Dendritic cell treated with granulocyte-macrophage colony-stimulating factor and Interleukin-4, amounts not matched to agents 40 ng/mL and 50 ng/mL, for 4 days (primary cell): ENCODE measurements at regions of chr15 and their contacts with region 1.

Region 1: DNA sequence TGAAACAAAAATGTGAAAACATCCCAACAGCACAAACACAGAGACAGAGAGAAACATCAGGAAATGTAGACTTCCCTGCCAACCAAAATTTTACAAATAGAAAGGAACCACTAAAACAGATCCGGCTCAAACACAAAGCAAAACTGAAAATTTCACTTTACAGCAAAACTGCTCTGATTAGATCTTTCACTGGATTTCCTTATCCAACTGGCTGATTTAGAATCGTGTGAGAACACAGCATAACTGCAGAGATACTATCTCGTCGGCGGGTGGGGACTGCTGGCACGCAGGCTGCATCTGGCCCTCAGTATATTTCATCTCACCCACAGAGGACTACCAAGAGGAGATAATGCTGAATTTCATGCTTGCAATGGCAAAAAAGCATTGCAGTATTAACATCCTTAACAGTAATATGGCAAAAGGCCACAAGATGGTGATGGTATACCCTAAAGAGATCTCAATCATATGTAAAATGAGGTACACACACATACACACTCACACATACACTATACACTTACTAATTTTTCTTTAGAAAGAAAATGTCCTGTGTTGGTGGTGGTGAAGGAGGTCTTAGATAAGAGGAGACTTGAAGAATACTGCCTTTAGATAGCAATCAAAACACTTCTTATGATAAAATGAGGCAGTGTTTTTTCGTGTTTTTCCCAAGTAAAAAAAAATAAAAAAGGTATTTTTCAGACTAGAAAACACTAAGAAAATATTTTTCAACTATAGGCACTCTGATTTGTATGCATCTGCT is 10.6 kb upstream of the LEO1 start:
- H3K4me3 Mint-ChIP-seq: peak overlapping the region; percentile 70
- H3K27ac Mint-ChIP-seq: peak overlapping the region; percentile 86
- H3K4me1 Mint-ChIP-seq: peaks cover 16% of the 10 kb centered on the region
- H3K27me3 Mint-ChIP-seq: no peaks in the 10 kb centered on the region

Region 2: DNA sequence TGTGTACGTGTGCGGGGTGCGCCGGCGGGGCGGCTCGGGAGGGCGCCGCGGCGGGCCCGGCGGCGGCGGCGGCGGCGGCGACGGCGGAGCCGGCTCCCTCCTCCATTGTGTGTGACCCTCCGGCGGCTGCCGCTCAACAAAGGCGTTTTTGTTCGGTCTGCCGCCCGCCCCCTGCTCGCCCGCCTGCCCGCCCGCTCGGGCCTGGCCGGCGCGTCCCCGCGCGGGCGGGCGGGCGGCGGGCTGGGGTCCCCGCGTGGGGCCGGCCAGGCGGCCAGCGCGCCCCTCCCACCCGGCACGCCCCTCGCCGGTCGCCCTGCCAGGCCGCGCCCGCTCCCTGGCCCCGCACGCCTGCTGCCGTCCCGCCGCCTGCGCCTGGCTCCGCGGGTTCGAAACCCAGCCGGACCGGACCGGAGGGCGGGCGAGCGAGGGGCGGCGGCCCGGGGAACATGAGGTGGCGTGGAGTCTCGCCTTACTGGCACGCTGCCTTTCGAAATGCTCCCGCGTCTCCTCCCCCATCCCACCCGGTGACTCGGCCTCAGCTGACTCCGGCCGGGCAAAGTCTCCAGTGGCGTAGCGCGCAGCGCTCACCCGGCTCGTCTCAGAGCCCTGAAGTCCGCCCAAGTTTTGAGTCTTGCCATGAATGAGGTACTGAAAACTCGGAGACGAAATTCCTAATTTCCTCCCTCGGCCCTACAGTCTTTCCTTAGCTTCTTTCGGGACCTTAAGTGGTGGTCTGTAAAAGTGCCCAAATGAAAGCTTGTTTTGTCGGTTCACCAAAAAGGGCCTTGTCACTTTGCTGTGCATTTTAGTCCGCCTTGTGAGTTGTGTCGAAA is 37.4 kb after region 1 on chr15:
- intact Hi-C with region 1: loop called (anchors 5 kb)
- H3K4me3 Mint-ChIP-seq: peak overlapping the region; percentile 98
- H3K27ac Mint-ChIP-seq: peak overlapping the region; percentile 100
- H3K4me1 Mint-ChIP-seq: peaks cover 50% of the 10 kb centered on the region
- H3K27me3 Mint-ChIP-seq: no peaks in the 10 kb centered on the region

Region 3: GRCh38 chr15:52078876-52079700 is 96.9 kb after region 1 on chr15:
- intact Hi-C with region 1: loop called (anchors 1 kb)
- H3K4me3 Mint-ChIP-seq: no peak overlapping the region
- H3K27ac Mint-ChIP-seq: no peak overlapping the region
- H3K4me1 Mint-ChIP-seq: peaks cover 50% of the 10 kb centered on the region
- H3K27me3 Mint-ChIP-seq: peaks cover 16% of the 10 kb centered on the region

Region 4: GRCh38 chr15:52139599-52140491 is 157.7 kb after region 1 on chr15:
- intact Hi-C with region 1: loop called (anchors 1 kb)
- H3K4me3 Mint-ChIP-seq: no peak overlapping the region
- H3K27ac Mint-ChIP-seq: peak overlapping the region; percentile 42
- H3K4me1 Mint-ChIP-seq: peaks cover 50% of the 10 kb centered on the region
- H3K27me3 Mint-ChIP-seq: peaks cover 5% of the 10 kb centered on the region

Region 5: GRCh38 chr15:52227456-52227855 is 245.3 kb after region 1 on chr15:
- intact Hi-C with region 1: loop called (anchors 2 kb)
- H3K4me3 Mint-ChIP-seq: no peak overlapping the region
- H3K27ac Mint-ChIP-seq: no peak overlapping the region
- H3K4me1 Mint-ChIP-seq: peaks cover 12% of the 10 kb centered on the region
- H3K27me3 Mint-ChIP-seq: no peaks in the 10 kb centered on the region